ENCODE measurements at regions of chr6 and their contacts with region 1.

Region 1: GRCh38 chr6:149431905-149432775 is 32.1 kb downstream of the SUMO4 start:
- DNase-seq: peak; percentile 98
- ATAC-seq: peak; percentile 98
- H3K4me3 Mint-ChIP-seq: no peak overlapping the region
- H3K27ac Mint-ChIP-seq: no peak overlapping the region
- H3K4me1 Mint-ChIP-seq: peaks cover 5% of the 10 kb centered on the region
- H3K27me3 Mint-ChIP-seq: no peaks in the 10 kb centered on the region
- CTCF ChIP-seq: peak; percentile 94

Region 2: DNA sequence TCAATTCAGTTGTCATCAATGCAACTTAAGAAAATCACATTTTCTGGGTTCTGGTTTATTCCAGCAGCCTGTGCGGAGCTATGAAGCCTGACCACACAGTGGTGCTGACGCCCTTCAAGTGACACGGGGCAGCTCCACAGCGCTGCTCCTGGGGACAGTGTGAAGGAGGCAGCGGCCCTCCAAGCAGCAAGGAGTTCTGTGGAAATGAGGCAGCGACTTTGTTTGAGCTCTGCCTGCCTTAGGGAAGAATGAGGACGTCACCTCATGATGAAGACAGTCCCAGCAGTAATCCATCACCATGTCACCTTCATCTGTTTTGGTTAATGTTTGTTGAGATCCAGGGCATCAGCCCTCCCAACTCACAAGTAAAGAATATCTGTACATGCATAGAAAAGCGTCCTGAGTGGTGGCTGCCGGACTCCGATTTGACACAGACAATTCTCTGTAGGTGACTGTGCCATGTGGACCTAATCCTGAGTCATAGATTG is 853.9 kb before region 1 on chr6:
- CTCF ChIA-PET with region 1: interaction called, 10 read pairs
- POLR2A ChIA-PET with region 1: no interaction called
- DNase-seq: peak; percentile 85
- ATAC-seq: peak; percentile 100
- H3K4me3 Mint-ChIP-seq: no peak overlapping the region
- H3K27ac Mint-ChIP-seq: no peak overlapping the region
- H3K4me1 Mint-ChIP-seq: peaks cover 33% of the 10 kb centered on the region
- H3K27me3 Mint-ChIP-seq: peaks cover 6% of the 10 kb centered on the region; the same call in 1 of the 2 replicates
- CTCF ChIP-seq: no peak

Region 3: DNA sequence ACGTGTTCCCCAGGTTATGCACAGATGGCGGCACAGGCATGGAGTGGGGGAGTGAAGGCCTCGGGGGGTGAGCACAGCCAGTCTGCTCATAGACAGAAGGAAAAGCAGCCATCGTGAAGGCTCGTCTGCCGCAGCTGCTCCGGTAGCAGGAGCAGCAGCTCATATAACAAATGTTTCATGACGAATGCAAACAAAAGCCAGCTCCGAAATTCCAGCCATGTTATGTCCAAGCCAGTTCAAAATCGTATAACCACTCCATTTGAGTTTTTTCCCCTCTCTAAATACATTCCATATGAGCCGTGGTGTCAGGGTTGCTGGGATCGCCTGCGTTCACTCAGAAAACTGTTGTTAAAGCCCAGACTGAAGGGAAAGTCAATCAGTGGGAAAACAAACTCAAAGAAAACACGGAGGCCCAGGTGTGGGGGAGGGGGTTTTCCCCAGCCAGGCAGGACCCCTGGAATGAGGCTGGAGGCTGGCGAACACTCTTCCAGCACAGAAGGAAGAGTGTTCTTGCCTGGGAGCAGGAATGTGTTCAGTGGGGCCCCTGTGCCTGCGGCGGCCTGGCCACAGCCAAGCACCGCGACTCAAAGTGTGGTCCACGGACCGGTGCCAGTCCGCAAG is 395.0 kb before region 1 on chr6:
- CTCF ChIA-PET with region 1: interaction called, 15 read pairs
- POLR2A ChIA-PET with region 1: no interaction called
- DNase-seq: peak; percentile 32
- ATAC-seq: peak; percentile 74
- H3K4me3 Mint-ChIP-seq: no peak overlapping the region
- H3K27ac Mint-ChIP-seq: peak overlapping the region; percentile 87
- H3K4me1 Mint-ChIP-seq: peaks cover 50% of the 10 kb centered on the region
- H3K27me3 Mint-ChIP-seq: no peaks in the 10 kb centered on the region
- CTCF ChIP-seq: no peak

Region 4: DNA sequence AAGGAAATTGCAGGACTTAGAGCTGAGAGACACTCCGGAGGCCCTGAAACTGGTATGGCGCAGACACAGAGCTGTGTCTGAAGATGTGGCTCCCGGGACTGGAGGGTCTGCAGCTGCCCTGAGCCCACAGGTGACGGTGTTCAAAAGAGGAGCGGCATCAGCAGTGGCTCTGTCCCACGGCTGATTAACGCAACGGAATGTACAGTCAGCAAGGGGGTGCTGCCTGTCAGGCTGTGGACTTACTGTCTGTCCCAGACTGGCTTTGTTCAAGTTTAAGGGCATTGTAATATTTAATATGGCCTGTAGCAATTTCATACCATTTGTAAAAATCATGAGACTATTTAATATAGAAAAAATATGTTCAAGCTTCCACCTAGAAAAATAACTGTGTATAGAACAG is 342.6 kb before region 1 on chr6:
- CTCF ChIA-PET with region 1: interaction called, 15 read pairs
- POLR2A ChIA-PET with region 1: no interaction called
- DNase-seq: no peak
- ATAC-seq: no peak
- H3K4me3 Mint-ChIP-seq: no peak overlapping the region
- H3K27ac Mint-ChIP-seq: no peak overlapping the region
- H3K4me1 Mint-ChIP-seq: peaks cover 11% of the 10 kb centered on the region
- H3K27me3 Mint-ChIP-seq: no peaks in the 10 kb centered on the region
- CTCF ChIP-seq: no peak

Region 5: GRCh38 chr6:149419696-149420404 is 12.3 kb before region 1 on chr6:
- CTCF ChIA-PET with region 1: interaction called, 17 read pairs
- POLR2A ChIA-PET with region 1: no interaction called
- DNase-seq: no peak
- ATAC-seq: no peak
- H3K4me3 Mint-ChIP-seq: no peak overlapping the region
- H3K27ac Mint-ChIP-seq: no peak overlapping the region
- H3K4me1 Mint-ChIP-seq: peaks cover 13% of the 10 kb centered on the region
- H3K27me3 Mint-ChIP-seq: no peaks in the 10 kb centered on the region
- CTCF ChIP-seq: no peak

Region 6: GRCh38 chr6:149454386-149454848 is 22.3 kb after region 1 on chr6:
- CTCF ChIA-PET with region 1: interaction called, 11 read pairs
- POLR2A ChIA-PET with region 1: no interaction called
- DNase-seq: no peak
- ATAC-seq: no peak
- H3K4me3 Mint-ChIP-seq: no peak overlapping the region
- H3K27ac Mint-ChIP-seq: no peak overlapping the region
- H3K4me1 Mint-ChIP-seq: no peaks in the 10 kb centered on the region
- H3K27me3 Mint-ChIP-seq: peaks cover 40% of the 10 kb centered on the region
- CTCF ChIP-seq: no peak

Measured in WTC11 (cell line).